SK-N-SH (cell line): ENCODE measurements at regions of chr4 and their contacts with region 1.

Region 1: GRCh38 chr4:16026160-16026761 is 57.6 kb downstream of the PROM1 start:
- DNase-seq: peak; percentile 39
- H3K4me3 ChIP-seq: peak overlapping the region in 1 of 2 experiments; percentile 29; a peak in 1 of 4 replicates
- H3K27ac ChIP-seq: no peak overlapping the region
- H3K4me1 ChIP-seq: peaks cover 0 to 5% of the 10 kb centered on the region in 2 experiments; a peak in 1 of 4 replicates
- H3K27me3 ChIP-seq: no peaks in the 10 kb centered on the region; the same call in 1 of the 2 replicates
- CTCF ChIP-seq: peak; percentile 96
- EP300 ChIP-seq: no peak
- RAD21 ChIP-seq: peak; percentile 93

Region 2: DNA sequence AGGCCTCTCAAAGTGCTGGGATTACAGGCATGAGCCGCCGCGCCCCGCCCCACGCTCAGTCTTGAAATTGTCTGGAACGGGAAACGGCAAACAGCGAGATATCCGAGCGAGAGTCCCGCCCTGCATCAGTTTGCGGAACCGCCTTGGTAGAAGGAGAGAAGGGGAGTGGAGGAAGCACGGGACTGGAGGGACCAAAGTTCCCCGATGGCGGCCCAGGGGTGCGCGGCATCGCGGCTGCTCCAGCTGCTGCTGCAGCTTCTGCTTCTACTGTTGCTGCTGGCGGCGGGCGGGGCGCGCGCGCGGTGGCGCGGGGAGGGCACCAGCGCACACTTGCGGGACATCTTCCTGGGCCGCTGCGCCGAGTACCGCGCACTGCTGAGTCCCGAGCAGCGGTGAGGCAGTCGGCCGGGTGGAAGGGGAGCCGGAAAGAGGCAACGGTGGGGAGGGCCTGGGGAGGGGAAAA is 323.3 kb before region 1 on chr4 and contains the start of gene BST1:
- CTCF ChIA-PET with region 1: no interaction called
- POLR2A ChIA-PET with region 1: no interaction called
- DNase-seq: peak; percentile 81
- H3K4me3 ChIP-seq: peak within 1 kb of the TSS; percentile 40 to 44
- H3K27ac ChIP-seq: no peak within 1 kb of the TSS
- H3K4me1 ChIP-seq: peaks cover 0 to 4% of the 10 kb centered on the region in 2 experiments; a peak in 2 of 4 replicates
- H3K27me3 ChIP-seq: no peaks in the 10 kb centered on the region
- CTCF ChIP-seq: no peak
- EP300 ChIP-seq: no peak
- RAD21 ChIP-seq: no peak
- polyA plus RNA-seq, gene BST1: 7.3 and 8.3 TPM in 2 replicates

Region 3: GRCh38 chr4:15836362-15836761 is 189.9 kb before region 1 on chr4:
- CTCF ChIA-PET with region 1: no interaction called
- POLR2A ChIA-PET with region 1: no interaction called
- DNase-seq: no peak
- H3K4me3 ChIP-seq: no peak overlapping the region
- H3K27ac ChIP-seq: no peak overlapping the region
- H3K4me1 ChIP-seq: no peaks in the 10 kb centered on the region
- H3K27me3 ChIP-seq: no peaks in the 10 kb centered on the region
- CTCF ChIP-seq: no peak
- EP300 ChIP-seq: no peak
- RAD21 ChIP-seq: no peak

Region 4: GRCh38 chr4:16205298-16206164 is 179.3 kb after region 1 on chr4:
- CTCF ChIA-PET with region 1: interaction called, 22 read pairs
- POLR2A ChIA-PET with region 1: no interaction called
- DNase-seq: peak; percentile 48
- H3K4me3 ChIP-seq: no peak overlapping the region
- H3K27ac ChIP-seq: no peak overlapping the region
- H3K4me1 ChIP-seq: no peaks in the 10 kb centered on the region; a peak in 2 of 4 replicates
- H3K27me3 ChIP-seq: no peaks in the 10 kb centered on the region
- CTCF ChIP-seq: peak; percentile 64
- EP300 ChIP-seq: no peak
- RAD21 ChIP-seq: peak; percentile 53